ENCODE measurements at regions of chr16 and their contacts with region 1.

Region 1: GRCh38 chr16:13919683-13920509 is at the start of gene ERCC4:
- DNase-seq: peak; percentile 97 to 100 (median 99)
- ATAC-seq: peak; percentile 94
- H3K4me3 ChIP-seq: peak within 1 kb of the TSS; percentile 78 to 91
- H3K4me3 Mint-ChIP-seq: peak within 1 kb of the TSS; percentile 90
- H3K27ac ChIP-seq: peak within 1 kb of the TSS; percentile 68 to 84
- H3K27ac Mint-ChIP-seq: peak within 1 kb of the TSS; percentile 88
- H3K4me1 ChIP-seq: peaks cover 13% of the 10 kb centered on the region
- H3K4me1 Mint-ChIP-seq: peaks cover 26% of the 10 kb centered on the region
- H3K27me3 ChIP-seq: no peaks in the 10 kb centered on the region
- H3K27me3 Mint-ChIP-seq: no peaks in the 10 kb centered on the region
- CTCF ChIP-seq: peak; percentile 74
- total RNA-seq, gene ERCC4: 8.0 to 10.6 TPM

Region 2: DNA sequence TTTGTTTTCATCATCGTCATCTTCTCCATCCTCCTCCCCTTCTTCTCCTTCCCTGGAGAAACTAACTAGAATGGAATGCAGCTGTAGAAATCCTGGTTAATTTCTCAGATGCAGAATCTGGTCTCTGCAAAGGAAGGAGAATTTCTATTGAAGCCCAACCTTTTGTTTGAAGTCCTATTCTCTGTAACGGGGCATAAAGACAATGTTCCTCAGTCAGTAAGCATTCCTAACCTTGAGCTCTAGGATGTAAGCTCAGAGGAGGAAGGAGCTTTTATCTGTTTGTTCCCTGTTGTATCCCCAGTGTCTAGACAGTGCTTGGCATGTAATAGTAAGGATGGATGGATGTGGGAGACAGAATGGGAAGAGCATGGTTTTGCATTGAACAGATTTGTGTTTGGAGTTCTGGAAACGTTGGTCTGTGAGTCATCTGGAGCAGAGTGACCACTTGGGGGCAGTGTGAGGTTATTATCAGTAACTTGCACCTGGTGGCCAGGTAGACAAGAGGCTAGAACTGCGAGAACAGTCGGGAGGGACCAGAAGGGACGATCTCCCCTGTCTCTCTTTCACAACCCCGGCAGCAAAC is 1579.7 kb before region 1 on chr16:
- CTCF ChIA-PET with region 1: no interaction called
- POLR2A ChIA-PET with region 1: no interaction called
- intact Hi-C with region 1: loop called in 1 of 2 experiments (anchors 5 kb)
- DNase-seq: peak in 3 of 9 experiments; percentile 8 to 27 (median 22)
- ATAC-seq: no peak
- H3K4me3 ChIP-seq: no peak overlapping the region
- H3K4me3 Mint-ChIP-seq: no peak overlapping the region
- H3K27ac ChIP-seq: no peak overlapping the region
- H3K27ac Mint-ChIP-seq: no peak overlapping the region
- H3K4me1 ChIP-seq: no peaks in the 10 kb centered on the region
- H3K4me1 Mint-ChIP-seq: no peaks in the 10 kb centered on the region
- H3K27me3 ChIP-seq: no peaks in the 10 kb centered on the region
- H3K27me3 Mint-ChIP-seq: no peaks in the 10 kb centered on the region
- CTCF ChIP-seq: peak; percentile 25

Region 3: DNA sequence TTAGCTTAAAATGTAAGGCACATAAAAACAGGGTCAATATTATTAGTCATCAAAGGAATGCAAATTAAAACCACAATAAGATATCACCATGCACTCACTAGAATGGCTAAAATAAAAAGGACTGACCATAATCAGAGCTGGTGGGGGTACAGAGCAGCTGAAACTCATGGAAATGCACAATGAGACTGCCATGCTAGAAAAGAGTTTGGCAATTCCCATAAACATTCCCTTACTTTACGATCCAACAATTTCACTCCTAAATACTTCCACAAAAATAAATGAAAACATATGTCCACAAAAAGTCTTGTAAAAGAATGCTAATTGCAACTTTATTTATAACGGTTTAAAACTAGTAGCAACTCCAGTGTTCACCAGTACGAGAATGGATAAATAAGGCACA is 36.0 kb before region 1 on chr16:
- CTCF ChIA-PET with region 1: no interaction called
- POLR2A ChIA-PET with region 1: no interaction called
- intact Hi-C with region 1: no loop called
- DNase-seq: no peak
- ATAC-seq: no peak
- H3K4me3 ChIP-seq: no peak overlapping the region
- H3K4me3 Mint-ChIP-seq: no peak overlapping the region
- H3K27ac ChIP-seq: no peak overlapping the region
- H3K27ac Mint-ChIP-seq: no peak overlapping the region
- H3K4me1 ChIP-seq: no peaks in the 10 kb centered on the region
- H3K4me1 Mint-ChIP-seq: no peaks in the 10 kb centered on the region
- H3K27me3 ChIP-seq: no peaks in the 10 kb centered on the region
- H3K27me3 Mint-ChIP-seq: peaks cover 11% of the 10 kb centered on the region
- CTCF ChIP-seq: no peak

Region 4: GRCh38 chr16:13906168-13907089 is 13.5 kb before region 1 on chr16:
- CTCF ChIA-PET with region 1: interaction called, 12 read pairs
- POLR2A ChIA-PET with region 1: no interaction called
- intact Hi-C with region 1: no loop called
- DNase-seq: no peak
- ATAC-seq: no peak
- H3K4me3 ChIP-seq: no peak overlapping the region
- H3K4me3 Mint-ChIP-seq: no peak overlapping the region
- H3K27ac ChIP-seq: no peak overlapping the region
- H3K27ac Mint-ChIP-seq: no peak overlapping the region
- H3K4me1 ChIP-seq: no peaks in the 10 kb centered on the region
- H3K4me1 Mint-ChIP-seq: peaks cover 1% of the 10 kb centered on the region
- H3K27me3 ChIP-seq: peaks cover 2 to 3% of the 10 kb centered on the region in 2 experiments
- H3K27me3 Mint-ChIP-seq: peaks cover 36% of the 10 kb centered on the region
- CTCF ChIP-seq: no peak

Region 5: GRCh38 chr16:13968835-13969234 is 48.9 kb after region 1 on chr16:
- CTCF ChIA-PET with region 1: no interaction called
- POLR2A ChIA-PET with region 1: no interaction called
- intact Hi-C with region 1: no loop called
- DNase-seq: no peak
- ATAC-seq: no peak
- H3K4me3 ChIP-seq: no peak overlapping the region
- H3K4me3 Mint-ChIP-seq: no peak overlapping the region
- H3K27ac ChIP-seq: no peak overlapping the region
- H3K27ac Mint-ChIP-seq: no peak overlapping the region
- H3K4me1 ChIP-seq: no peaks in the 10 kb centered on the region
- H3K4me1 Mint-ChIP-seq: no peaks in the 10 kb centered on the region
- H3K27me3 ChIP-seq: no peaks in the 10 kb centered on the region
- H3K27me3 Mint-ChIP-seq: peaks cover 9% of the 10 kb centered on the region
- CTCF ChIP-seq: no peak

Region 6: GRCh38 chr16:14070877-14071575 is 151.1 kb after region 1 on chr16 and contains the start of gene MRTFB:
- CTCF ChIA-PET with region 1: interaction called, 5 read pairs
- POLR2A ChIA-PET with region 1: no interaction called
- intact Hi-C with region 1: loop called (anchors 2 kb)
- DNase-seq: peak; percentile 67 to 90 (median 78)
- ATAC-seq: peak; percentile 88
- H3K4me3 ChIP-seq: peak within 1 kb of the TSS; percentile 60 to 83
- H3K4me3 Mint-ChIP-seq: peak within 1 kb of the TSS; percentile 89
- H3K27ac ChIP-seq: peak within 1 kb of the TSS; percentile 5 to 41
- H3K27ac Mint-ChIP-seq: peak within 1 kb of the TSS; percentile 81
- H3K4me1 ChIP-seq: peaks cover 11% of the 10 kb centered on the region
- H3K4me1 Mint-ChIP-seq: peaks cover 15% of the 10 kb centered on the region
- H3K27me3 ChIP-seq: no peaks in the 10 kb centered on the region
- H3K27me3 Mint-ChIP-seq: peaks cover 7% of the 10 kb centered on the region
- CTCF ChIP-seq: no peak
- total RNA-seq, gene MRTFB: 13.4 to 14.5 TPM

Region 7: GRCh38 chr16:14310519-14310991 is 390.7 kb after region 1 on chr16:
- CTCF ChIA-PET with region 1: no interaction called
- POLR2A ChIA-PET with region 1: no interaction called
- intact Hi-C with region 1: loop called in 1 of 2 experiments (anchors 5 kb)
- DNase-seq: no peak
- ATAC-seq: no peak
- H3K4me3 ChIP-seq: no peak overlapping the region
- H3K4me3 Mint-ChIP-seq: no peak overlapping the region
- H3K27ac ChIP-seq: no peak overlapping the region
- H3K27ac Mint-ChIP-seq: no peak overlapping the region
- H3K4me1 ChIP-seq: peaks cover 36% of the 10 kb centered on the region
- H3K4me1 Mint-ChIP-seq: peaks cover 41% of the 10 kb centered on the region
- H3K27me3 ChIP-seq: no peaks in the 10 kb centered on the region
- H3K27me3 Mint-ChIP-seq: no peaks in the 10 kb centered on the region
- CTCF ChIP-seq: no peak

Region 8: GRCh38 chr16:14600164-14600563 is 680.3 kb after region 1 on chr16:
- CTCF ChIA-PET with region 1: interaction called, 4 read pairs
- POLR2A ChIA-PET with region 1: no interaction called
- intact Hi-C with region 1: loop called (anchors 2 to 10 kb)
- DNase-seq: peak in 2 of 9 experiments; percentile 20 to 39
- ATAC-seq: no peak
- H3K4me3 ChIP-seq: no peak overlapping the region
- H3K4me3 Mint-ChIP-seq: no peak overlapping the region
- H3K27ac ChIP-seq: no peak overlapping the region
- H3K27ac Mint-ChIP-seq: no peak overlapping the region
- H3K4me1 ChIP-seq: no peaks in the 10 kb centered on the region
- H3K4me1 Mint-ChIP-seq: no peaks in the 10 kb centered on the region
- H3K27me3 ChIP-seq: no peaks in the 10 kb centered on the region
- H3K27me3 Mint-ChIP-seq: no peaks in the 10 kb centered on the region
- CTCF ChIP-seq: peak; percentile 62

Measured in CD8-positive, alpha-beta T cell (primary cell).